ENCODE measurements at regions of chr11 and their contacts with region 1.

Region 1: DNA sequence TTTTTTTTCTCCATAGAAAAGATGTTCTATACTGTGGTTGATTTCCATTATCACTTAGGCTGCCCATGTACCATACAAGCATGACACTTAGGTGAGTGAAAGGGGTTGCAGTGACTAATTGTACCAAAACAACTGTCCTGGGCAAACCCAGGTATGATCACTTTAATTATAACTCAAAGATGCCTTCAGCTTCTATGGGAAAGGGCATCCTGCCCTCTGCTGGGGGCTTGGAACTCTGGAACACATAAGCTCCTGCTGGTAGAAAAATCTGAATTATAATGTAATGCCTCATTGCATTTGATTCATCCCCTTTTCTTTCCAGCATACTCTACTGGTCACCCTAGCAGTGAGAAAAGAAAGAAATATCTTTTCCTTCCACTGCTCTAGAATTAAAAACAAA is 206.3 kb downstream of the DDX10 start:
- DNase-seq: peak; percentile 75
- ATAC-seq: peak; percentile 58
- H3K4me3 ChIP-seq: no peak overlapping the region
- H3K27ac ChIP-seq: peak overlapping the region; percentile 85; the same call in 1 of the 2 replicates
- H3K4me1 ChIP-seq: peaks cover 4% of the 10 kb centered on the region
- H3K27me3 ChIP-seq: no peaks in the 10 kb centered on the region
- CTCF ChIP-seq: peak; percentile 68
- POLR2A ChIP-seq: no peak
- RAD21 ChIP-seq: peak; percentile 74

Region 2: GRCh38 chr11:108929241-108929640 is 58.1 kb after region 1 on chr11:
- CTCF ChIA-PET with region 1: no interaction called
- POLR2A ChIA-PET with region 1: no interaction called
- dilution Hi-C with region 1: no loop called
- in situ Hi-C with region 1: no loop called
- intact Hi-C with region 1: loop called (anchors 2 kb)
- DNase-seq: peak; percentile 99
- ATAC-seq: peak; percentile 82
- H3K4me3 ChIP-seq: peak overlapping the region; percentile 31; the same call in 1 of the 2 replicates
- H3K27ac ChIP-seq: peak overlapping the region; percentile 89
- H3K4me1 ChIP-seq: peaks cover 15% of the 10 kb centered on the region
- H3K27me3 ChIP-seq: no peaks in the 10 kb centered on the region
- CTCF ChIP-seq: no peak
- POLR2A ChIP-seq: peak; percentile 68; the same call in 1 of the 2 replicates
- RAD21 ChIP-seq: peak; percentile 20; the same call in 1 of the 2 replicates

Region 3: GRCh38 chr11:109422870-109423465 is 551.8 kb after region 1 on chr11:
- CTCF ChIA-PET with region 1: no interaction called
- POLR2A ChIA-PET with region 1: no interaction called
- dilution Hi-C with region 1: no loop called
- in situ Hi-C with region 1: no loop called
- intact Hi-C with region 1: loop called (anchors 10 kb)
- DNase-seq: no peak
- ATAC-seq: peak; percentile 57
- H3K4me3 ChIP-seq: peak overlapping the region; percentile 40
- H3K27ac ChIP-seq: no peak overlapping the region
- H3K4me1 ChIP-seq: peaks cover 4% of the 10 kb centered on the region
- H3K27me3 ChIP-seq: peaks cover 11% of the 10 kb centered on the region; the same call in 1 of the 2 replicates
- CTCF ChIP-seq: no peak
- POLR2A ChIP-seq: no peak
- RAD21 ChIP-seq: no peak

Region 4: DNA sequence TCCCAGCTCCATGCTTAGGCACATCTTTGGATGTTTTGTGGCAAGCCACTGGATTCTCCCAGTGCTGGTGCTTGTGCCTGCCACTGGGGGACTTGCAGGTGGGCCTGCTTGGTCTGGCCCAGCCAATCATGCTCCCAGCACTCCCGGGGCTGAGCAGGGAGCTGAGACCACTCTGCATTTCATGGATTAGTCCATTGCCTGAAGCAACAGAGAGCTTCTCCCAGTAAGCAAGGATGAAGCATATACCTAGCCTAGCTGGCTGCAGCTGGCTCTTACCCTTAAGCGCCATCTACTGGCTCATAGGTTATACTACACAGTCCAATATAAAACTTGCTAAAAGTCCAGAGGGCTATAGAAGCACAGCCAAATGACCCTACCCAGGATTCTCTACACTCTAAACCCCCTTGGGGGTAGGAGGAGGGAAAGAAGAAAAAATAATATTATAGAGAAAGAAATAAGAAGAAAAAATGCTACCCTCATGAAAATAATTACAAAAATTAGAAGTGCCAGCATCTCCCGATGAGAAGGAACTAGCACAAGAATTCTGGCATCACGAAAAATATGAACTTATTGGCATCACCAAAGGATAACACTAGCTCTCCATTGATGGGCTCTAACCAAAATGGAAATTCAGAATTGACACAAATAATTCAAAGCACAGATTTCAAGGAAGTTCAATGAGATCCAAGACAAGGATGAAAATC is 826.1 kb after region 1 on chr11:
- CTCF ChIA-PET with region 1: no interaction called
- POLR2A ChIA-PET with region 1: no interaction called
- dilution Hi-C with region 1: no loop called
- in situ Hi-C with region 1: no loop called
- intact Hi-C with region 1: loop called (anchors 10 kb)
- DNase-seq: peak; percentile 50
- ATAC-seq: peak; percentile 98
- H3K4me3 ChIP-seq: no peak overlapping the region
- H3K27ac ChIP-seq: no peak overlapping the region
- H3K4me1 ChIP-seq: no peaks in the 10 kb centered on the region
- H3K27me3 ChIP-seq: no peaks in the 10 kb centered on the region; the same call in 1 of the 2 replicates
- CTCF ChIP-seq: peak; percentile 72
- POLR2A ChIP-seq: no peak
- RAD21 ChIP-seq: peak; percentile 74

Measured in IMR-90 (cell line).